ENCODE measurements at regions of chr3 and their contacts with region 1.

Region 1: DNA sequence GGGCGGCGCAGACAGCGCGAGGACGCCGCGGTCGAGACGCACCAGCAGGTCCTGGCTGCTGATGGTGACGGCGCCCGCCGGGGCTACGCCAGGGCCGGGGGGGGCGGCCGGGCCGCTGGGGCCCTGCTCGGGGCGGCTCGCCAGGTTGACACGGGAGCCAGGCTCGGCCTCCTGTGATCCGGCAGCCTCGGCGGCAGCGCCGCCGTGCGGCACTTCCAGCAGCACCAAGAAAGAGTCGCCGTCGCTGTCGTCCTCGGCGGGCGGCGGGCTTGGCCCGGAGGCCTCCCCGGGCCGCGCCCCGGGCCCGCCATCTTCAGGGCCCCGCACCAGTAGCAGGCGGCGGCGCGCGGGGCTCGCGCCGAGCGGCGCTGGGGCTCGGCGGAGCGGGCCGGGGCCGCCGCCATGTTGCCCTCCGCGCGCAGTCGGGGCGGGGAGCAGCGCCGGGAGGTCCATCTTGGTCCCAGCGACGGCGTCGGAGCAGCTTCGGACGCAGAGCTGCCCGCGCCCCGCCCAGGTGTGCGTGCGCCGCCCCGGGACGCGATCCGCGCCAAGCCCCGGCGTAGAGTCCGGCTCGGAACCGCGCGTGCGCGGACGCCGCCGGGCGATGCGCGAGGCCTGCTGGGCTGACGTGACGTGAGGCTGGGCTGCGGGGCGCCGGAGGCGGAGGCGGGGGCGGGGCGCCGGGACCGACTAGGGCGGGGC is at the start of gene ZXDC:
- DNase-seq: peak; percentile 97
- H3K4me3 Mint-ChIP-seq: peak within 1 kb of the TSS; percentile 95
- H3K27ac Mint-ChIP-seq: peak within 1 kb of the TSS; percentile 93
- H3K4me1 Mint-ChIP-seq: peaks cover 29% of the 10 kb centered on the region
- H3K27me3 Mint-ChIP-seq: peaks cover 3% of the 10 kb centered on the region
- total RNA-seq, gene ZXDC: 29.2 and 29.4 TPM in 2 replicates

Region 2: DNA sequence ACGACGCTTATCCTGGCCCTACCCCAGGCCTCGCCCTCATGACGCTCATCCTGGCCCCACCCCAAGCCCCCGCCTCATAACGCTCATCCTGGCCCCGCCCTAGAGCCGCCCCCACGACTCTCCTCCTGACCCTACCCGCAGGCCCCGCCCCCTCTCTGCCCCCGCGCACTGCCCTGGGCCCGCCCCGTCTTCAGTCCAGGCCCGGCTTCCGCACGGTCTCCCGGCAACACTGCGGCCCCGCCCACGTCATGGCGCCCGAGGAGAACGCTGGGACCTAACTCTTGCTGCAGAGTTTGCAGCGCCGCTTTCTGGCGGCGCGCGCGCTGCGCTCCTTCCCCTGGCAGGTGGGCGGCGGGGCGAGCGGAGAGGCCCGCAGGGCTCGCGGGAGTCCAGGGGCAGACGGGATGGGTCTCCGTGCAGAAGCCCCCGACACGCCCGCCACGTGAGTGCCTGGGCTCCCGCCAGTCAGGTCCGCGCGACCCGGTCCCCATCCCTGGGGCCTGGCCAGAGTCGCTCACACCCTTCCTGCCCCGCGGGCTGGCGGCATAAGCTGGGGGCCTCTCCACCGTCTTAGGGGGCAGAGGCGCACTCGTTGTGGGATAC is 559.1 kb before region 1 on chr3:
- intact Hi-C with region 1: loop called (anchors 5 kb)
- DNase-seq: peak; percentile 98
- H3K4me3 Mint-ChIP-seq: peak overlapping the region; percentile 92
- H3K27ac Mint-ChIP-seq: peak overlapping the region; percentile 84
- H3K4me1 Mint-ChIP-seq: peaks cover 20% of the 10 kb centered on the region
- H3K27me3 Mint-ChIP-seq: no peaks in the 10 kb centered on the region

Region 3: GRCh38 chr3:126357295-126358037 is 118.1 kb before region 1 on chr3 and contains the start of gene KLF15:
- intact Hi-C with region 1: loop called (anchors 1 kb)
- DNase-seq: peak; percentile 93
- H3K4me3 Mint-ChIP-seq: peak within 1 kb of the TSS; percentile 86
- H3K27ac Mint-ChIP-seq: peak within 1 kb of the TSS; percentile 62
- H3K4me1 Mint-ChIP-seq: peaks cover 7% of the 10 kb centered on the region
- H3K27me3 Mint-ChIP-seq: peaks cover 44% of the 10 kb centered on the region
- total RNA-seq, gene KLF15: 0.19 and 0.28 TPM in 2 replicates

Region 4: GRCh38 chr3:126433496-126434263 is 41.9 kb before region 1 on chr3:
- intact Hi-C with region 1: no loop called
- DNase-seq: no peak
- H3K4me3 Mint-ChIP-seq: no peak overlapping the region
- H3K27ac Mint-ChIP-seq: no peak overlapping the region
- H3K4me1 Mint-ChIP-seq: no peaks in the 10 kb centered on the region
- H3K27me3 Mint-ChIP-seq: no peaks in the 10 kb centered on the region

Region 5: DNA sequence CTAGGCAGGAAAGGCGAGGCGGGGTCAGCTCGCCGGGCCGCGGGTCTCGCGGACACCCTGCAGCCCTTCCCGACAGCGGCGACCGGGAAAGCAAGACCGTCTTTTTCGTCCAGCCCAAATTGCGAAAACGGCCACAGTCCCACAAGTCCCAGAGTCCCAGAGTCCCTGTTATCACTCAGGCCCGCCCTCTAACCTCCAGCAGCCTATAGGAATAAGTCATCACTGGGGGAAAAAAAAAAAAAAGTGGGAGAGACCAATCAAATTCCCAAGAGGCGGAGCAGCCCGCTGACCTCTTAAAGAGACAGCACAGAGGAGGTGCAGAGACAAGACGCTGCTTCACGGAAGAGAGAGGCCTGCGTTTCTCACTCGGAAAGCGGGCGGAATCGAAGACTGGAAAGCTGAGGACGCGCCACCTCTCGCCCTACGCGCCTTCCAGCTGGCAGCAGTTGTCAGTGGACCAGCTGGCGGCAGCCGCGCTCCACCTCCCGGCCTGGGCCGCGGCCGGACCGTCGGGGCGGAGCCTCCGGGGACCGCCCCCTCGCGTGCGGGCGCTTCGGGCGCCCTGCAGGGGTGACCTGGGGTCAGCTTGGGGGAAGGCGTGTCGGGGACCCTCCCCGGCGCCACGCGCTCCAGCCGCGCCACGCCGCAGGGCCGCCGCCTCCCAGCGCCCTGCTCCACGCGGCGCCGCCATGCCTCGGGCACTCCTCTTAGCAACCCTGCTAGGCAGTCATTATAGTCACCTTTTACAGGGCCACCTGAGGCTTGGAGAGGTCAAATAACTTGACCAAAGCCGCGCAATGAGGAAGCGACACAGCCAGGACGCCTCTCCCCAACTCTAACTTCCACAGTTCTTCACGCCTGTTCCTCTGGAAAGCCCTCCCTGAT is 1115.3 kb after region 1 on chr3 and contains the start of gene TPRA1:
- intact Hi-C with region 1: loop called (anchors 5 kb)
- DNase-seq: peak; percentile 95
- H3K4me3 Mint-ChIP-seq: peak within 1 kb of the TSS; percentile 93
- H3K27ac Mint-ChIP-seq: peak within 1 kb of the TSS; percentile 95
- H3K4me1 Mint-ChIP-seq: peaks cover 22% of the 10 kb centered on the region
- H3K27me3 Mint-ChIP-seq: no peaks in the 10 kb centered on the region
- total RNA-seq, gene TPRA1: 32.9 and 37.2 TPM in 2 replicates

Region 6: DNA sequence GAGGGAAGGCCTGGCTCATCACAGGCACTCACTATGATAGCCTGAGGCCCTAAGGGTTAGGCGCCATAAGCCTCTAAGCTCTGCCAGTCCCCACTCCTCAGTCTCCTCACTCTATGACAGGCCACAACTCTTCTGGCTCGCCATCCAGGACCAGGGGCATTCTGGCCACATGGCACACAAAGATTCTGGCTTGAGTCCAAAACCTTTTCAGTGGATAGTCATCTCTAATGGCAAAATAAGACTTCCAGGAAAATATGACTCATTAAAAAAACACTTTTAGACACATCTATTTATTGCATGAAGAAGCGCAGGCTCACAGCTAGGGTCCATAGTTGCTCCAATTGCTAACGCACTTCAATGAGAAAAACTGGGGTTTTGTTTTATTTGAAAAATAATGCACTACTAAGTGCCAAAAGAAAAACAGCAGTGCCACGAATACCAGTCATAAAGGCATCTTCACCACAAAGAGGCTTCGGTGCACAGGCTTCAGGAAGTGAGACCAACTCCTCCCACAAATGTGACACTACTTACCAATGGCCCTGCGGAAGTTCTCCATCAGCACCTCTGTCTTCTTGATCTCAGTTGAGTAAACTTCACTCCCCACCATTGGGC is 1636.9 kb after region 1 on chr3:
- intact Hi-C with region 1: loop called (anchors 10 kb)
- DNase-seq: peak; percentile 79
- H3K4me3 Mint-ChIP-seq: peak overlapping the region; percentile 48
- H3K27ac Mint-ChIP-seq: peak overlapping the region; percentile 91
- H3K4me1 Mint-ChIP-seq: peaks cover 33% of the 10 kb centered on the region
- H3K27me3 Mint-ChIP-seq: no peaks in the 10 kb centered on the region